Upper lobe of right lung (tissue), 1 donor: ENCODE measurements at regions of chr22 and their contacts with region 1.

Region 1: DNA sequence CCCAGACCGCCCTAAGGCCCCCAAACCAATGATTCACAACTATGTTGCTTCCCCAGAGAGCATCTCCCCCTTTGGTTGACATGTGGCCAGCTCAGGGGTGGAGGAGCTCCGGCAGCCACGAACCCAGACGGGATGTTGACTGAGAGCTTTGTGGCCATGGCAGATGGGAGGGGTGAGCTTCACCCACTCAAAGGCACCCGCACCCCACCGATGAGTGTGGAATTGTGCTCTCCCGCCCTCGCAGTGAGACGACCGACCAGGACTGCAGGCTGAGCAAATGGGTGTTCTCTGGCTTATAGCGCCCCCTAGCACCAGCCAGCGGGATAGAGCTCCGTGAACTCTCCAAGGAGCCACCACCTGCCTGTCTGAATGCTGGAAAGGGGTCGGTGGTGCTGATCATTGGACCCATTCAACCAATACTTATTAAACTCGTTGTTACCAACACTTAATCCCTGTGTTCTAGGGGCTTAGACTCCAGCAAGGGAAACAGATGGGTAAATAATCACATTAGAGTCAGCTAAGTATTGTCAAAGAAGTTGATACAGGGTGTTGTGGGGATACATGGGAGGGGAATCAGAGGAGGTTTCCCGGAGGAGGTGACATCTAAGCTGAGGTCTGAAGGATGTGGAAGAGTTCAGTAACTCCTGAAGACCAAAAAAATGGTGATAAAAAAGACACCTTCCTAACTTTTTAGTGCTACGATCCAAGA is 4.5 kb upstream of the TIMP3 start:
- DNase-seq: peak; percentile 77
- ATAC-seq: peak; percentile 84
- H3K4me3 ChIP-seq: no peak overlapping the region
- H3K27ac ChIP-seq: no peak overlapping the region
- H3K4me1 ChIP-seq: peaks cover 19% of the 10 kb centered on the region
- H3K27me3 ChIP-seq: peaks cover 4% of the 10 kb centered on the region
- CTCF ChIP-seq: peak; percentile 91

Region 2: GRCh38 chr22:32528984-32529982 is 267.7 kb before region 1 on chr22:
- intact Hi-C with region 1: loop called (anchors 2 kb)
- DNase-seq: peak; percentile 86
- ATAC-seq: peak; percentile 85
- H3K4me3 ChIP-seq: no peak overlapping the region
- H3K27ac ChIP-seq: peak overlapping the region; percentile 71
- H3K4me1 ChIP-seq: peaks cover 40% of the 10 kb centered on the region
- H3K27me3 ChIP-seq: no peaks in the 10 kb centered on the region
- CTCF ChIP-seq: peak; percentile 83

Region 3: DNA sequence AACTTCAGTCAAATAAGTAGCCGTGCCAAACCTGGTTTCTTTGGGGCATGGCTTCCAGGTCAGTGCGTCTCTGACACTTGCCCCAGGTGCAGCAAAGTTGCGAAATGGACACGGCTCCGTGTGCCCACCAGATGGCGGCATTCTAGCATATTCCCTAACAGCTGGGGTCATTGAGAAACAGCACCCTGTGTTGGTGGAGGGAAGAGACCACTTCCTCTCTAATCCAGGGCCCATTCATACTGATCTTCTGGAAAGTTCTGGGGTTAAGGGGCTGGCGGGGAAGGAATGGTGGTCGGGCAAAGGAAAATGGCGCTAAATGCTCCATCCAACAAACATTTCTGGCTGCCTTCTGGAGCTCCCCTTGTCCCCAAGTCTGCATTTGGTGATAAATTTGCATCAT is 136.7 kb before region 1 on chr22:
- intact Hi-C with region 1: loop called (anchors 10 kb)
- DNase-seq: peak; percentile 80
- ATAC-seq: peak; percentile 89
- H3K4me3 ChIP-seq: no peak overlapping the region
- H3K27ac ChIP-seq: no peak overlapping the region
- H3K4me1 ChIP-seq: peaks cover 7% of the 10 kb centered on the region
- H3K27me3 ChIP-seq: no peaks in the 10 kb centered on the region
- CTCF ChIP-seq: peak; percentile 73

Region 4: DNA sequence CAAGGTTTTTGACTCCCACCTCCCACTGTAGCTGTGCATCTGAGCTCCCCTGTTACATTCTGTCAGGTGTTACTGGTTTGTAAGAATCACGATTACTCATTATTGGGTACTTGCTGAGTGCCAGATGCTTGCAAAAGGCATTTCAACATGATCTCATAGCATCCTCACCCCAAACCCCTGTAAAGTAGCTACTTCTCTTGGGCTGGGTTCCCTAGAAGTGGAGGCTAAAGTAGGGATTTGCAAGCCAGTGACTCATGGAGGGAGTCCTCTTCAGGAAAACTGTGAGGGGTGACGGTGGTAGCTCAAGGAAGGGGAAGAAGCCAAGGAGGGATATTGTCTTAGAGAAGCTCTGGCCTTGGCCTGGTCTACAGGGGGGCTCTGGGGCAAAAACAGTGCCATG is 83.0 kb after region 1 on chr22:
- intact Hi-C with region 1: no loop called
- DNase-seq: no peak
- ATAC-seq: no peak
- H3K4me3 ChIP-seq: no peak overlapping the region
- H3K27ac ChIP-seq: no peak overlapping the region
- H3K4me1 ChIP-seq: peaks cover 13% of the 10 kb centered on the region
- H3K27me3 ChIP-seq: no peaks in the 10 kb centered on the region
- CTCF ChIP-seq: no peak

Region 5: GRCh38 chr22:32897400-32897799 is 100.4 kb after region 1 on chr22:
- intact Hi-C with region 1: no loop called
- DNase-seq: no peak
- ATAC-seq: peak; percentile 53
- H3K4me3 ChIP-seq: no peak overlapping the region
- H3K27ac ChIP-seq: no peak overlapping the region
- H3K4me1 ChIP-seq: no peaks in the 10 kb centered on the region
- H3K27me3 ChIP-seq: no peaks in the 10 kb centered on the region
- CTCF ChIP-seq: no peak